OCI-LY7 (cell line): ENCODE measurements at regions of chr12 and their contacts with region 1.

Region 1: DNA sequence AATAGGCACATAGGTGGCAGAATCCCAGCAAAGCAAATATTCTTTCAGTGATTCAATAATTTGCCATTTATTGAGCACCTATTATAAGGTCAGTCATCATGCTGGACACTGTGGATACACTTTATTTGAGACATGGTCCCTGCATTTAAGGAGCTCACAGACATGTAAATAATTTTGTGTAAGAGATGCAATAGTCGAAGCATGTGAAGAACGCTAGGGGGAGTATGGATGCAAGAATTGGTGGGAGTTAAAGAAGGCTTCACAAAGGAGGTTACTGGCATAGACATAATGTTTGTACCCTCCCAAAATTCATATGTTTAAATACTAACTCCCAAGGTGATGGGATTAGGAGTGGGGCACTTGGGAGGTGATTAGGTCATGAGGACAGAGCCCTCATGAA is 260.6 kb upstream of the GARIN6 start:
- DNase-seq: peak; percentile 67
- H3K4me3 ChIP-seq: no peak overlapping the region
- H3K27ac ChIP-seq: no peak overlapping the region
- H3K4me1 ChIP-seq: peaks cover 78% of the 10 kb centered on the region
- CTCF ChIP-seq: peak; percentile 76

Region 2: DNA sequence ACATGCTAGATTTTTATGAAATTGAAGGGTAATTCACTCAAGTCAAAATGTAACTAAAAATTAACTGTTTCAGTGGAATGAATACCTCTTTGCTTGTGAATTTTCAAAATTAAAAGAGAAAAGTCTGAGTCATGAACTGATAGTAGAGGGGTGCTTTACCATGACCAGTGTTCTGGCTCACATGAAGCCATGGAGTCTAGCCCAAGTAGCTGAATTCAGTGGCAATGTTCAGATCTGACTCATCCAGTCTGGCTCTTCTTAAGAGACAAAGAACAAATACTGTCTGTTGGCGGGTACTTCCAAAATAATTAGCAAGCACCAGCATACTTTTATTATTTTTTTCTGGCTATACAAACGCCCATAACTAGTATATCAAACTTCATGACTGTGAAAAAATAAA is 105.6 kb before region 1 on chr12:
- CTCF ChIA-PET with region 1: no interaction called
- POLR2A ChIA-PET with region 1: interaction called, 3 read pairs
- intact Hi-C with region 1: loop called (anchors 5 kb)
- DNase-seq: no peak
- H3K4me3 ChIP-seq: no peak overlapping the region
- H3K27ac ChIP-seq: peak overlapping the region; percentile 77
- H3K4me1 ChIP-seq: peaks cover 38% of the 10 kb centered on the region
- CTCF ChIP-seq: no peak

Region 3: DNA sequence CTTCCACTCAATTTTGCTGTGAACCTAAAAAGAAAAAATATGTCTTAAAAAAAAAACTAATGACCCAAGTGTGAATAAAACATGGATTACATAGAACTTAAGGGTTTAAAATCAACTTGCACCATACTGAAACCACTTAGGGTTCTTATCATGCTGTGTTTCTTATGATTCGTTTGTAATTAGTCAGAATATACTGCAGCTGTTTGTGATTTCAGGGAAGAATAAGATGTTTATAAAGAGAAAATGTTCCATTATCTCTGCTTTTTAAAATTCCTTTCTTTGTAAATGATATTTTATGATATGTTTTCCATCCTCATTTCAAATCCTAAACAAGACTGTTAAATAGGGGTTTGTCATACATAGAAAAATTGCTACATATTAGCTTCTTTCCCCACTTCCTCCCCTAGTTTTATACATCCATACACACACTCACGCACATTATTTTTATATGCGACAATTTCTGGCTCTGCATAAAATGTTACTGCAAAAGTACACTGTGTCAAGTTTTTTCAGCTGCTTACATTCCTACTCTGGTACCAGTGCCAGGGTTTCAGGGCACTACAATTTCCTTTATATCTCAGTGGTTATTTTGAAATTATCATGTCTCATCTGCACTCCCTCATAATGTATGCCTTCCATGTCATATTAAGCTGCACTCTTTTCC is 14.5 kb before region 1 on chr12:
- CTCF ChIA-PET with region 1: no interaction called
- POLR2A ChIA-PET with region 1: interaction called, 11 read pairs
- intact Hi-C with region 1: no loop called
- DNase-seq: no peak
- H3K4me3 ChIP-seq: no peak overlapping the region
- H3K27ac ChIP-seq: no peak overlapping the region
- H3K4me1 ChIP-seq: peaks cover 5% of the 10 kb centered on the region
- CTCF ChIP-seq: no peak

Region 4: DNA sequence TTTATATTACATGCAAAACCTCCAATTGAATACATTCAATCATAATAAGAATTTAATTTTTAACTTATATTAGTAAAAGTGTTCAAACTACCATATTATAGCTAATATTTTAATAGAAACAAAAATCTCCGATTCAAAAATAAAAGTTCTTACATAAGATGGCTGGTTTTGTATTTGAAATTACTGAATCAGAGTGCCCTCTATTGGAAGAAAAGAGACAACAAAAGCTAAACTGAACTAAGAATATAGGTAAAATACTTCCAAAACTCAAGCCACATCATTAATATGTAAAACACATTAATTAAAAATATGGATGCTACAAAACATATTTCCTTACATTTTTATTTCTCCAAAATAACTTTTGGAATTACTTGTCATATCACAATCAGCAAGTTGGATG is 380.9 kb after region 1 on chr12:
- CTCF ChIA-PET with region 1: no interaction called
- POLR2A ChIA-PET with region 1: interaction called, 10 read pairs
- intact Hi-C with region 1: loop called (anchors 5 kb)
- DNase-seq: peak; percentile 59
- H3K4me3 ChIP-seq: no peak overlapping the region
- H3K27ac ChIP-seq: no peak overlapping the region
- H3K4me1 ChIP-seq: peaks cover 31% of the 10 kb centered on the region
- CTCF ChIP-seq: peak; percentile 89